Aorta (tissue), 5 donors: ENCODE measurements at regions of chr12 and their contacts with region 1.

Region 1: GRCh38 chr12:62971769-62972525 is 37.0 kb upstream of the PPM1H start:
- DNase-seq: no peak
- ATAC-seq: no peak
- H3K4me3 ChIP-seq: no peak overlapping the region
- H3K27ac ChIP-seq: peak overlapping the region in 1 of 2 donors; percentile 12
- H3K4me1 ChIP-seq: peaks cover 0 to 5% of the 10 kb centered on the region in 2 donors
- H3K27me3 ChIP-seq: no peaks in the 10 kb centered on the region

Region 2: GRCh38 chr12:62995097-62995496 is 23.1 kb after region 1 on chr12:
- intact Hi-C with region 1: no loop called
- DNase-seq: no peak
- ATAC-seq: no peak
- H3K4me3 ChIP-seq: no peak overlapping the region
- H3K27ac ChIP-seq: no peak overlapping the region
- H3K4me1 ChIP-seq: no peaks in the 10 kb centered on the region
- H3K27me3 ChIP-seq: peaks cover 0 to 1% of the 10 kb centered on the region in 2 donors

Region 3: GRCh38 chr12:63045020-63045860 is 73.3 kb after region 1 on chr12:
- intact Hi-C with region 1: loop called in 1 of 2 experiments (anchors 5 kb)
- DNase-seq: peak in 1 of 2 donors; percentile 59
- ATAC-seq: peak; percentile 74
- H3K4me3 ChIP-seq: no peak overlapping the region
- H3K27ac ChIP-seq: peak overlapping the region; percentile 92 to 93
- H3K4me1 ChIP-seq: peaks cover 4 to 8% of the 10 kb centered on the region in 2 donors
- H3K27me3 ChIP-seq: no peaks in the 10 kb centered on the region